ENCODE measurements at regions of chr20 and their contacts with region 1.

Region 1: GRCh38 chr20:19934792-19935491 is 82.2 kb upstream of the NAA20 start:
- DNase-seq: peak; percentile 88
- H3K4me3 ChIP-seq: peak overlapping the region; percentile 31 to 52 (median 49)
- H3K27ac ChIP-seq: peak overlapping the region; percentile 85
- H3K4me1 ChIP-seq: peaks cover 42% of the 10 kb centered on the region
- H3K27me3 ChIP-seq: no peaks in the 10 kb centered on the region
- CTCF ChIP-seq: no peak

Region 2: DNA sequence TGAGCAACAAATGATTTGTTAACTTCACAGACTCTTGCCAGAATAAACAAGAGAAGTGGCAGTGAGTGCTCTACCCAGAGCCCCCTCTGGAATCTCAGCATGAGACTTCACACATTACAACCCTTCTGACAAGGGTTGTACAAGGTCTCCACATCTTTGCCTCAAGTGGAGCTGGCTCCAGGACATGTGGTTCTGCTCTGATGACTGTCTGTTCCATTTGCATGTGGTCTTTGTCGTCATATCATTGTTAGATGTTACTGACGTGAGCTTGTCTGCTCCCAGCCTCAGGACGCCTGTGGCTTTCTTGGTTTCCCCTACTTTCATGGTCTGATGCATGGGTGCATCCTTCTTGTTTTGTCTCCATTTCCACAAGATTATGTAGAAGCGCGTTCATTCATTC is 607.5 kb before region 1 on chr20:
- CTCF ChIA-PET with region 1: no interaction called
- dilution Hi-C with region 1: no loop called
- in situ Hi-C with region 1: no loop called
- intact Hi-C with region 1: no loop called
- DNase-seq: no peak
- H3K4me3 ChIP-seq: no peak overlapping the region
- H3K27ac ChIP-seq: no peak overlapping the region
- H3K4me1 ChIP-seq: no peaks in the 10 kb centered on the region
- H3K27me3 ChIP-seq: no peaks in the 10 kb centered on the region
- CTCF ChIP-seq: no peak

Region 3: DNA sequence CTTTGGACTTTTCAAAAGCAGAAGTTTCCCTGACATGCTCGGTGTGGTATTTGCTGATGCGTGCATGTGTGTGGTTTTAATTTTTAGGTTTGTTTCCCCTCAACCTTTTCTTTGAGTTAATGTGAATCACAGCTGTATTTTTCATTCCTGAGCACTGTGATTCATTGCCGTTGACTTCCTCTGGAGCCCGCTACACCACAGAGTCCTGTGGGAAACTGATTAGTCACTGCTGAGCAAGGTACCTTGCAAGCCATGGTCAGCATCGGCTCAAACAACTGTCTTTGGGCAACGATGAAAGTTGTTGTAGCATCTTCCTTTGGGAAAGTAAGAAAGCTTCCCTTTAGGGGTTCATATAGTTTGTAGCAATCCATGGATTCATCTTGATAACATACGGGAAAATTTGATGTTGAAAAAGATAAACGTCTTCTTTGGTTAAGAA is 119.4 kb before region 1 on chr20:
- CTCF ChIA-PET with region 1: no interaction called
- dilution Hi-C with region 1: no loop called
- in situ Hi-C with region 1: no loop called
- intact Hi-C with region 1: loop called (anchors 5 kb)
- DNase-seq: peak; percentile 97
- H3K4me3 ChIP-seq: no peak overlapping the region
- H3K27ac ChIP-seq: peak overlapping the region; percentile 92
- H3K4me1 ChIP-seq: peaks cover 46% of the 10 kb centered on the region
- H3K27me3 ChIP-seq: no peaks in the 10 kb centered on the region
- CTCF ChIP-seq: peak in 1 of 2 donors; percentile 43